PC-3 (cell line): ENCODE measurements at regions of chr5 and their contacts with region 1.

Region 1: GRCh38 chr5:5421961-5422818 is at the start of gene ICE1:
- DNase-seq: peak; percentile 98
- ATAC-seq: peak; percentile 93
- H3K4me3 ChIP-seq: peak within 1 kb of the TSS; percentile 98
- H3K27ac ChIP-seq: peak within 1 kb of the TSS; percentile 88
- H3K4me1 ChIP-seq: peaks cover 35% of the 10 kb centered on the region
- H3K27me3 ChIP-seq: no peaks in the 10 kb centered on the region
- CTCF ChIP-seq: no peak
- total RNA-seq, gene ICE1: 21.9 and 23.8 TPM in 2 replicates

Region 2: DNA sequence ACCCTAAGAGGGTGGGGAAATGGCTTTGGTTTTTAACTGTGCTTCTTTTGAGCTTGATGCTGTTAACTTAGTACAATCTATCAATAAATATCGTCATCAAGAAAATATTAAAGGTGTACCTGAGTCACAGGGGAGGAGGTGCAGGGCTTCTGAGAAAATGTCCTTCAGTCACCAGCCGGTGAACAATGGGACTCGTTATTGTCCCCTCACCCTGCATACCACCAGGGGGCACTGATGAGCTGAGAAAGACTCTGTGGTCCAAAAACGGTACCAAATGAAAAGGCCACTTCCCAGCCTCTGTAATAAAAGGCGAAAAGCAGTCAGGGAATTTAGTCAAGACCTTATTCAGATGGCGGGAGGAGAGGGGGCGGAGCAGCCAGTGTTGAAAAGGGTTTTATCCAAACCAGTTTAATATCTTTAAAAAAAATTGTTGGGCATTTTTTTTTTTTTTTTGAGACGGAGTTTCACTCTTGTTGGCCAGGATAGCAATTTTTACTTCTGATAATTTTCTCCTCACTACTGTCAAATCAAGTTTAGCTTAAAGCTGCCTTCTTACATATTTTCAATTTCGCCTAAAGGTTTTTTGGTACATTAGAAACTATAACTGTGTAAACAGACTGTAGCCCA is 554.0 kb before region 1 on chr5:
- CTCF ChIA-PET with region 1: no interaction called
- POLR2A ChIA-PET with region 1: no interaction called
- intact Hi-C with region 1: loop called (anchors 1 kb)
- DNase-seq: peak; percentile 75
- ATAC-seq: peak; percentile 62
- H3K4me3 ChIP-seq: no peak overlapping the region
- H3K27ac ChIP-seq: no peak overlapping the region
- H3K4me1 ChIP-seq: no peaks in the 10 kb centered on the region
- H3K27me3 ChIP-seq: peaks cover 42% of the 10 kb centered on the region
- CTCF ChIP-seq: peak; percentile 88

Region 3: GRCh38 chr5:4879693-4880303 is 542.4 kb before region 1 on chr5:
- CTCF ChIA-PET with region 1: interaction called, 3 read pairs
- POLR2A ChIA-PET with region 1: no interaction called
- intact Hi-C with region 1: loop called (anchors 1 kb)
- DNase-seq: peak; percentile 88
- ATAC-seq: peak; percentile 86
- H3K4me3 ChIP-seq: no peak overlapping the region
- H3K27ac ChIP-seq: no peak overlapping the region
- H3K4me1 ChIP-seq: no peaks in the 10 kb centered on the region
- H3K27me3 ChIP-seq: peaks cover 64% of the 10 kb centered on the region
- CTCF ChIP-seq: peak; percentile 93

Region 4: DNA sequence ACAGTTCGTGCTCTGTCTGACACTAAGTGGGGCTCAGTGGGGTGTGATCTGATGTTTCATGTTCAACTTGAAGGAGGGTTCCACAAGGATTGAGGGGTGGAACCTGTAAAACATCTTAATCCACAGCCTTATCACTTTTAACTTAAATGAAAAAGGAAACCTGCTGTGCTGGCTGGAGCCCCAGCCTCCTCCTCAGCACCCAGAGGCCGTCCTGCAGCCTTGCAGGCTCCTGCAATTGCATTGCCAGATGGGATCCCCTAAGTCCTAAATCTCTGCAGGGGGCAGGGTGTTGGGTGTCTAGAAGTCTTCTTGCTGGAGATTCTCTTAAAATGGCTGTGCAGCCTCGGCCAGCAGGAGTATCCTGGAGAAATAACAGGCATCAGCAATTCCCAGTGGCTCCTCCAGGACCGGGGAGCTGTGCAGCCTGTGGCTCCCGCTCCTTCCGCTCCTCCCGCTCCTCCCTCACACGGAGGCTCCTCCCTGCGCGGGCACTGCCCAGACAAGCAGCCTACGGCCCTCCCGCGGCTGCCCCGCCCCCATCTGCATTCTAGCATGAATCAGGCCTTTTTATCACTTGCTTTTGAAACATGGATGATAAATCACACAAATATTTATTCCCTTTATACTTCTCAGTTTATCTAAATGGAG is 151.1 kb before region 1 on chr5:
- CTCF ChIA-PET with region 1: no interaction called
- POLR2A ChIA-PET with region 1: no interaction called
- intact Hi-C with region 1: loop called (anchors 10 kb)
- DNase-seq: peak; percentile 96
- ATAC-seq: peak; percentile 100
- H3K4me3 ChIP-seq: peak overlapping the region; percentile 48
- H3K27ac ChIP-seq: peak overlapping the region; percentile 57
- H3K4me1 ChIP-seq: peaks cover 16% of the 10 kb centered on the region
- H3K27me3 ChIP-seq: no peaks in the 10 kb centered on the region
- CTCF ChIP-seq: peak; percentile 14; the same call in 1 of the 2 replicates

Region 5: DNA sequence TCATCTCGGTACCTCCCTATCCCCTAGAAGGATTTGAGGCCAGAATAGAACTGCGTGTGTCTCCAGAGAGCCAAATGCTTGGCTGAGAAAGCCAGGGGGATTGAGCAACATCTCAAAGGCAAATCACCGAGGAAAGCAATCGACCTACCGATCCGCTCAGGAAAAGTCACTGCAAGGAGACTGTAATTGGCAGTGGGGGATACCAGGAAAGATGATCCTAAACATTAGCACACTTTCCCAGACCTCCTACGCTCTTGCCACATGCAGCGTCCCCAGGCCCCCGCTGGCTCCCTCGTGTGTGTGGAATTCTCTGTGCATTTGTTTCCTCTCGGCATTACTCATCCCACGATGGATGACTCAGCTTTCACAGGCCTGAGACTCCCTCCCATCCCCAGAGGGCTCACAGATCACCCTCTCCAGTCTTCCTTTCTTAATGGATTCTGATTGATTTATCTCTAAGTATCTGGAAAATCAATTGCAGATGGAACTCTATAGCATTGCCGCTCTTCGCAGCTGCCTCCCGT is 81.9 kb before region 1 on chr5:
- CTCF ChIA-PET with region 1: interaction called, 3 read pairs
- POLR2A ChIA-PET with region 1: no interaction called
- intact Hi-C with region 1: loop called (anchors 5 kb)
- DNase-seq: peak; percentile 95
- ATAC-seq: peak; percentile 73
- H3K4me3 ChIP-seq: no peak overlapping the region
- H3K27ac ChIP-seq: peak overlapping the region; percentile 69
- H3K4me1 ChIP-seq: peaks cover 57% of the 10 kb centered on the region
- H3K27me3 ChIP-seq: no peaks in the 10 kb centered on the region
- CTCF ChIP-seq: peak; percentile 76